ENCODE measurements at regions of chr19 and their contacts with region 1.

Region 1: GRCh38 chr19:3708208-3708931 is at the start of gene TJP3:
- DNase-seq: no peak
- ATAC-seq: no peak
- H3K4me3 ChIP-seq: no peak within 1 kb of the TSS
- H3K4me3 Mint-ChIP-seq: no peak within 1 kb of the TSS
- H3K27ac ChIP-seq: no peak within 1 kb of the TSS
- H3K27ac Mint-ChIP-seq: no peak within 1 kb of the TSS
- H3K4me1 ChIP-seq: peaks cover 0 to 6% of the 10 kb centered on the region in 2 experiments
- H3K4me1 Mint-ChIP-seq: peaks cover 4 to 11% (median 5%) of the 10 kb centered on the region in 3 donors
- H3K27me3 ChIP-seq: peaks cover 0 to 59% of the 10 kb centered on the region in 2 experiments
- H3K27me3 Mint-ChIP-seq: peaks cover 0 to 4% of the 10 kb centered on the region in 2 donors
- total RNA-seq, gene TJP3: 12.6 to 28.9 (median 19.4) TPM

Region 2: GRCh38 chr19:3695986-3696659 is 12.2 kb before region 1 on chr19:
- CTCF ChIA-PET with region 1: interaction called in 1 of 2 experiments, 12 read pairs
- POLR2A ChIA-PET with region 1: interaction called in 1 of 2 experiments, 3 read pairs
- DNase-seq: no peak
- ATAC-seq: no peak
- H3K4me3 ChIP-seq: no peak overlapping the region
- H3K4me3 Mint-ChIP-seq: no peak overlapping the region
- H3K27ac ChIP-seq: no peak overlapping the region
- H3K27ac Mint-ChIP-seq: peak overlapping the region in 1 of 2 donors; percentile 23
- H3K4me1 ChIP-seq: peaks cover 5 to 46% of the 10 kb centered on the region in 2 experiments
- H3K4me1 Mint-ChIP-seq: peaks cover 16 to 44% (median 34%) of the 10 kb centered on the region in 3 donors
- H3K27me3 ChIP-seq: no peaks in the 10 kb centered on the region
- H3K27me3 Mint-ChIP-seq: no peaks in the 10 kb centered on the region

Region 3: DNA sequence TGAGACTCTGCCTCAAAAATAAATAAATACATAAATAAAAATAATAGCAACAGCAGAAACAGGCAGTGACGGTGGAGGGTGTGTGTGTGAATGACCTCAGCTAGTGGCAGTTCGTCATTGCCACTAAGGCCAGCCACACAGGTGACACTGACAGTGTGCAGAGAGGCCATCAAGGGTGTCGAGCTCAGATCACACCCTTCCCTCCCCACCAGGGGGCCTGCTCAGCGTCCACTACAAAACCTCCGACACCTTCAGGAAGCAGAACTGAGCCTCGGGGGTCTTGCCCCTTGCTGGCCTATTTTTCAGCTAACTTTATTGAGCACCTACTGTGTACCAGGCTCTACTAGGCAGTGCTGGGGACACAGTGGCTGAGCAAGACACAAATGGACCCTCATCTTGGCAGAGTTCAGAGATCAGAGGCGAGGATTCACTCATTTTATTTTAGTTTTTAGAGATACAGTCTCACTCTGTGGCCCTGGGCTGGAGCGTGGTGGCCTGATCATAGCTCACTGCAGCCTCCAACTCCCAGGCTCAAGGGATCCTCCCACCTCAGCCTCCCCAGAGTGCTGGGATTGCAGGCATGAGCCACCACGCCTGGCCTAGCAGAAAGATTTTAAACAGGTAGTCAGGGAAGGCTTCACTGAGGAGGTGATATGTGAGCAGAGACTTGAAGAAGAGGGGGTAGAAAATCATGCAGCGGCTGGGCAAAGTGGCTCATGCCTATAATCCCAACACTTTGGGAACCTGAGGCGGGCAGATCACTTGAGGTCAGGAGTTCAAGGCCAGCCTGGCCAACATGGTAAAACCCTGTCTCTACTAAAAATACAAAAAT is 881.4 kb after region 1 on chr19:
- CTCF ChIA-PET with region 1: interaction called in 1 of 2 experiments, 14 read pairs
- POLR2A ChIA-PET with region 1: no interaction called
- DNase-seq: peak in 3 of 35 experiments; percentile 5 to 33 (median 10)
- ATAC-seq: no peak
- H3K4me3 ChIP-seq: no peak overlapping the region
- H3K4me3 Mint-ChIP-seq: no peak overlapping the region
- H3K27ac ChIP-seq: no peak overlapping the region
- H3K27ac Mint-ChIP-seq: peak overlapping the region in 1 of 2 donors; percentile 58
- H3K4me1 ChIP-seq: peaks cover 0 to 3% of the 10 kb centered on the region in 2 experiments
- H3K4me1 Mint-ChIP-seq: peaks cover 0 to 6% (median 0%) of the 10 kb centered on the region in 3 donors
- H3K27me3 ChIP-seq: peaks cover 0 to 80% of the 10 kb centered on the region in 2 experiments
- H3K27me3 Mint-ChIP-seq: peaks cover 44 to 64% of the 10 kb centered on the region in 2 donors

Measured in T-cell (primary cell).